Activated CD4-positive, alpha-beta memory T cell treated with anti-CD3 and anti-CD28 coated beads, Interleukin-2, amount 10 ng/mL, durations not matched to agents 7 days and 5 days (primary cell): ENCODE measurements at regions of chr4 and their contacts with region 1.

Region 1: DNA sequence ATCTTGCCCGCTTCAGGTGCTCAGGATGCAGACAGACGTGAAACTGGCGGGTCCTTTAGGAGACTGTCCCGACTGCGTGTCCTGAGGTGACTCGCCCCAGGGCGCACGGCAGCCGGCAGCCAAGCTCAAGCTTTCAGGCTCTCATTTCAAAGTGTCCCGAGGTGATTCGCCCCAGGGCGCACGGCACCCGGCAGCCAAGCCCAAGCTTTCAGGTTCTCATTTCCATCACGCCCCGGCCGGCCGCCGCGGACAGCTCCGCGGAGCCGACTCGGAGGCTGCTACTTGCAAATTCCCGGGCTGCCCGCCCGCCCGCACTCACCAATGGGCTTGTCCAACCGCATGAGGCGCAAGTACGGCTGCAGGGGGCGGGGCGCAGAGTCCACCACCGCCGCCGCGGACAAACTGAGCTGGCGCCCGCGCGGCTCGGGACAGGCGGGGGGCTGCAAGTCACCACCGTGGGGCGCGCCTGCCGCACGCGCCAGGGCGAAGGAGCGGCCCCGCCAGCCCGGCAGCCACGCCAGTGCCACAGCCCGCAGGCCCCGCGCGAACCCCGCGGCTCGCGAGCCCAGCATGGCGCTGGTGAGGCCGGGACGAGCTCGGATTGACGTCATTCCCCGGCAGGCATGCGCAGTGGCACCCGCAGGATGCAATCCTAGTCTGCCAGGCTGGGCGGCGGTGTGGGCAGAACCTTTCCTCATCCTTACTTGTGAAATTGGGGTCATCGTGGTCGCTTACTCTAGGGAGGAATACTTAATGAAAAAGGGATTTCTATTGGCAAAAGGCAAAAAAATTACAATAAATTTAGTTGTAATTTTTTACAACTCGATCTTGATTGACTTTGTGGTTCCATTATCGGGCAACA is at the start of gene COQ2:
- DNase-seq: peak; percentile 95
- H3K4me3 Mint-ChIP-seq: peak within 1 kb of the TSS; percentile 87
- H3K27ac Mint-ChIP-seq: peak within 1 kb of the TSS; percentile 97
- H3K4me1 Mint-ChIP-seq: peaks cover 45% of the 10 kb centered on the region
- H3K27me3 Mint-ChIP-seq: no peaks in the 10 kb centered on the region
- total RNA-seq, gene COQ2: 20.3 to 20.7 TPM

Region 2: DNA sequence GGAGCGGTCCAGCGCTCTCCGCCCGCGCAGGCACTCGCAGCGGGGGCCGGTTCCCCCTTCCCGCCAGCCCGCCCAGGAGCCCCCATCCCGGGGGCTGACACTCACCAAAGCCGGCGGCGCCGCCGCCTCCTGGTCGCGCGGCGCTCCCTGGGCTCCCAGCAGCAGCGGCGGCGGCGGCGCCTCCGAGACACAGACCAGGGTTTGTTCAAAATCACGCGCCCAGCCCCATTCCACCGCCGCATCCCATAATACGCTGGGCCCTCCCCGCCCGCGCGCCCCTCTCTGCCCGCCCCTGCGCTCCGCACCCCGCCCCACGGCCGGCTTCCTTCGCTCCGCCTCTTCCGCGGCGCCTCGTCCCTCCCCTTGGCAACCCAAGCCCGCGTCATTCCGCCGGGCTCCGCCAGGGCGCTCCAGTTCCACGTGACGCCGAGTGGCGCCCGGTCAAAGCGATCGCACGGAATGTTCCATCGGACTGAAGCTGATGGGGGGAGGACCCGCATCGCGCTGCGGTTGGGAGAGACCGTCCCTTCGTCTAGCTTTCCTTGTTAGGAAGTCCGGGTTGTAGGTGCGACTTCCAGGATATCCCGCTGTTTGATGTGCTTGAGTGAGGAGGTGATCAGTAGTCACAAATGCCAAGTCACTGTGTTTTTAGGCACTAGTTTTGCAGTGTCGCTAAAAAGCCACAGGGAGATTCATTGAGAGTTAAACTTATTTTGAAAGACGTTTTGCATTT is 271.6 kb before region 1 on chr4:
- CTCF ChIA-PET with region 1: interaction called, 5 read pairs
- POLR2A ChIA-PET with region 1: interaction called, 15 read pairs
- DNase-seq: peak; percentile 98
- H3K4me3 Mint-ChIP-seq: peak overlapping the region; percentile 88
- H3K27ac Mint-ChIP-seq: peak overlapping the region; percentile 78
- H3K4me1 Mint-ChIP-seq: peaks cover 38% of the 10 kb centered on the region
- H3K27me3 Mint-ChIP-seq: no peaks in the 10 kb centered on the region

Region 3: GRCh38 chr4:83054928-83055327 is 229.5 kb before region 1 on chr4:
- CTCF ChIA-PET with region 1: interaction called, 12 read pairs
- POLR2A ChIA-PET with region 1: interaction called, 4 read pairs
- DNase-seq: no peak
- H3K4me3 Mint-ChIP-seq: no peak overlapping the region
- H3K27ac Mint-ChIP-seq: no peak overlapping the region
- H3K4me1 Mint-ChIP-seq: no peaks in the 10 kb centered on the region
- H3K27me3 Mint-ChIP-seq: no peaks in the 10 kb centered on the region

Region 4: GRCh38 chr4:83110223-83110945 is 174.0 kb before region 1 on chr4:
- CTCF ChIA-PET with region 1: interaction called, 8 read pairs
- POLR2A ChIA-PET with region 1: interaction called, 15 read pairs
- DNase-seq: peak; percentile 91
- H3K4me3 Mint-ChIP-seq: peak overlapping the region; percentile 84
- H3K27ac Mint-ChIP-seq: peak overlapping the region; percentile 89
- H3K4me1 Mint-ChIP-seq: peaks cover 57% of the 10 kb centered on the region
- H3K27me3 Mint-ChIP-seq: peaks cover 3% of the 10 kb centered on the region

Region 5: GRCh38 chr4:83259586-83259985 is 24.8 kb before region 1 on chr4:
- CTCF ChIA-PET with region 1: interaction called, 21 read pairs
- POLR2A ChIA-PET with region 1: interaction called, 9 read pairs
- DNase-seq: no peak
- H3K4me3 Mint-ChIP-seq: no peak overlapping the region
- H3K27ac Mint-ChIP-seq: no peak overlapping the region
- H3K4me1 Mint-ChIP-seq: peaks cover 5% of the 10 kb centered on the region
- H3K27me3 Mint-ChIP-seq: no peaks in the 10 kb centered on the region

Region 6: DNA sequence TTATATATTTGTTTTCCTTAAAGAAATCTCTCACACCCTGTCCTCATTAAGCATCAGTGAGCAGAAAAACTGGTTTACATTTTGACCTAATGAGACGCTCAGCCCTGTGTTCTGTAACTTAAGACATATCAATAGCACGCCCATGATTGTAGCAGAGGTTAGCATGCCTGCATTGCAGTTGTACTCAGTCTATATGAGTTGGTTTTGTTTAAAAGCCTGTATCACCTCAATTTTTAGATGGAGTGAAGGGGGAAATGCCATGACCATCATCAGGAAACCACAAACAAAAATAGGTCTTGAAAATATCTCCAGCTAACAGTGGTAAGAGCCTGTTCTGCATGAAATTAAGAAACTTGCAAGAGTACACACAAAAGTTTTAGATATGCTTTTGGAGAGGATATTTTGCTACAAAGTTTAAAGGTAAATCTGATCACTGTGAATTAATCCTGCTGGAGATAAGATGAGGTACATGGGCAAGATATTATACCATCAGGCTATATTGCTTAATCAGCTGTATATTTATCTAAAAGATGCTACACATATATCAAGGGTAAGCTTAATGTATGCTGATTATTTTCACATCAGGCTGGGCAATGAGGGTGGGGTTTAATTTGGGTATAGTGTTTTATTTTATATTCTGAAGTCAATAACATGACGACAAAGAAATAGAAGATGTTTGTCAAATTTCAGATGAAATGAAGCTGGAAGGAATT is 13.3 kb after region 1 on chr4:
- CTCF ChIA-PET with region 1: interaction called, 31 read pairs
- POLR2A ChIA-PET with region 1: interaction called, 37 read pairs
- DNase-seq: no peak
- H3K4me3 Mint-ChIP-seq: no peak overlapping the region
- H3K27ac Mint-ChIP-seq: peak overlapping the region; percentile 75
- H3K4me1 Mint-ChIP-seq: peaks cover 26% of the 10 kb centered on the region
- H3K27me3 Mint-ChIP-seq: no peaks in the 10 kb centered on the region

Region 7: GRCh38 chr4:83455281-83456129 is 171.1 kb after region 1 on chr4 and contains the starts of genes HELQ and MRPS18C:
- CTCF ChIA-PET with region 1: interaction called, 15 read pairs
- POLR2A ChIA-PET with region 1: interaction called, 26 read pairs
- DNase-seq: peak; percentile 97
- H3K4me3 Mint-ChIP-seq: peak within 1 kb of the TSS; percentile 99
- H3K27ac Mint-ChIP-seq: peak within 1 kb of the TSS; percentile 100
- H3K4me1 Mint-ChIP-seq: peaks cover 49% of the 10 kb centered on the region
- H3K27me3 Mint-ChIP-seq: no peaks in the 10 kb centered on the region
- total RNA-seq, gene HELQ: 16.4 to 17.8 TPM
- total RNA-seq, gene MRPS18C: 58.1 to 58.5 TPM